B cell (primary cell): ENCODE measurements at regions of chr1 and their contacts with region 1.

Region 1: GRCh38 chr1:1122078-1122811 is 6.4 kb upstream of the C1orf159 start:
- DNase-seq: peak; percentile 90
- ATAC-seq: peak; percentile 97
- H3K4me3 ChIP-seq: peak overlapping the region in 4 of 5 experiments; percentile 28 to 52 (median 44)
- H3K4me3 Mint-ChIP-seq: peak overlapping the region; percentile 47
- H3K27ac ChIP-seq: peak overlapping the region; percentile 29 to 37
- H3K27ac Mint-ChIP-seq: no peak overlapping the region
- H3K4me1 ChIP-seq: peaks cover 29 to 31% of the 10 kb centered on the region in 2 donors
- H3K4me1 Mint-ChIP-seq: peaks cover 19% of the 10 kb centered on the region
- H3K27me3 ChIP-seq: peaks cover 0 to 30% (median 3%) of the 10 kb centered on the region in 4 experiments
- H3K27me3 Mint-ChIP-seq: peaks cover 9% of the 10 kb centered on the region
- CTCF ChIP-seq: peak; percentile 96

Region 2: GRCh38 chr1:983799-984473 is 138.3 kb before region 1 on chr1:
- CTCF ChIA-PET with region 1: interaction called, 11 read pairs
- POLR2A ChIA-PET with region 1: no interaction called
- intact Hi-C with region 1: no loop called
- DNase-seq: peak; percentile 73
- ATAC-seq: peak; percentile 95
- H3K4me3 ChIP-seq: no peak overlapping the region
- H3K4me3 Mint-ChIP-seq: no peak overlapping the region
- H3K27ac ChIP-seq: no peak overlapping the region
- H3K27ac Mint-ChIP-seq: no peak overlapping the region
- H3K4me1 ChIP-seq: peaks cover 0 to 3% of the 10 kb centered on the region in 2 donors
- H3K4me1 Mint-ChIP-seq: no peaks in the 10 kb centered on the region
- H3K27me3 ChIP-seq: peaks cover 0 to 22% (median 0%) of the 10 kb centered on the region in 4 experiments
- H3K27me3 Mint-ChIP-seq: peaks cover 38% of the 10 kb centered on the region
- CTCF ChIP-seq: peak; percentile 90

Region 3: DNA sequence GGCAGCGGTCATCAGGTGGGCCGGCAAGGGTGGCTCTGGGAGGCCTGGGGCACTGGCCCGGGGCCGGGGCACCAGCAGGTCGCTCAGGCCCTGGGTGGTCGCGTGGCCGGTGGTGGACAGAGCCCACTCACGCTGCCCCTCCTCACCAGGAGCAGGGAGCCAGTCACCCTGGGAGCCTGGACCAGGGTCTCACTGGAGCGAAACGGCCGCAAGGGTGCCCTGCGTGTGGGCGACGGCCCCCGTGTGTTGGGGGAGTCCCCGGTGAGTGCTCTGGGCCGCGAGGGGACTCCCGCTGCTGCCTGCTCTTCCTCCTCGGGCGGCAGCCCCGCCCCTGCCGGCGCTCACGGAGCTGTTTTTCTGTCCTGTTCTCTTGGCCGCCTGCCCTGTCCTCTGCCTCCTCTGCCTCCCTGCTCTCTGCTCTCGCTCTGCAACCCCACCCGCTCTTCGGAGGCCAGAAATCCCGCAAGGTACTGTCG is 71.6 kb before region 1 on chr1:
- CTCF ChIA-PET with region 1: no interaction called
- POLR2A ChIA-PET with region 1: no interaction called
- intact Hi-C with region 1: no loop called
- DNase-seq: peak; percentile 59
- ATAC-seq: peak; percentile 71
- H3K4me3 ChIP-seq: no peak overlapping the region
- H3K4me3 Mint-ChIP-seq: peak overlapping the region; percentile 32
- H3K27ac ChIP-seq: no peak overlapping the region
- H3K27ac Mint-ChIP-seq: no peak overlapping the region
- H3K4me1 ChIP-seq: no peaks in the 10 kb centered on the region
- H3K4me1 Mint-ChIP-seq: peaks cover 4% of the 10 kb centered on the region
- H3K27me3 ChIP-seq: no peaks in the 10 kb centered on the region
- H3K27me3 Mint-ChIP-seq: no peaks in the 10 kb centered on the region
- CTCF ChIP-seq: no peak

Region 4: DNA sequence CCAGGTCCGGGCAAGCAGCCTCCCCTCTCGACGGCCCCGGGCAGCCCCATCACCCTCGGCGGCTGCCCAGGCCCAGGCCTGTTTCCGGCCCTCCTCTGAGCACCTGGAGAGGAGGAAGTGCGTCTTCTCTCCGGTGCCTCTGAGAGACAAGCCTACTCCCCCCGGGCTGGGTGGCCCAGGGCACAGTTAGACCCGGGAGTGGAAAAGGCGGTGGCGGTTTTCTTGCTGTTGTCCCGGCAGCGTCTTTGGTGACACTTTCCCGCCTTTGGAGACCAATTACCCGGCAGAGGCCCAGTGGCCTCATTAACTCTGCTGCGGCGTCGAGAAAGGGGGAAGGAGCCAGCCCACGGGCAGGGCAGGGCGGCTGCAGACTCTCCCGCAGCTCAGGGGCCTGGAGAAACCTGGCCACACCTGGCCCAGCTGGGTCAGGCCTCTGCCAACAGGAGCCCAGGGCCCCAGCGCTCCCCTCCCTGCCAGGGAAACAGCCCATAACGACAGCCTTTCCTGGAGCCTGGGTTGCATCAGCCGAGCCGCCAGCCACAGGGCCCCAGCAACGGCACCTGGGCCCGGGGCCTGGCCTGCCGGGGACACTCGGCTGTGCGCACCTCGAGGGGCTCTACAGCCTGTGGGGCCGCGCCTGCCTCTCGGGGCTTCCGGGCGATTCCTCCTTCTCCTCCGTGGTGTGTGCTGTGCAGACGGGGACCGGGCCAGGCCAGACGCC is 22.0 kb after region 1 on chr1:
- CTCF ChIA-PET with region 1: interaction called, 11 read pairs
- POLR2A ChIA-PET with region 1: interaction called, 10 read pairs
- intact Hi-C with region 1: no loop called
- DNase-seq: peak; percentile 92
- ATAC-seq: peak; percentile 95
- H3K4me3 ChIP-seq: peak overlapping the region in 4 of 5 experiments; percentile 29 to 45 (median 34)
- H3K4me3 Mint-ChIP-seq: peak overlapping the region; percentile 78
- H3K27ac ChIP-seq: peak overlapping the region; percentile 98
- H3K27ac Mint-ChIP-seq: peak overlapping the region; percentile 96
- H3K4me1 ChIP-seq: peaks cover 33 to 47% of the 10 kb centered on the region in 2 donors
- H3K4me1 Mint-ChIP-seq: peaks cover 29% of the 10 kb centered on the region
- H3K27me3 ChIP-seq: no peaks in the 10 kb centered on the region
- H3K27me3 Mint-ChIP-seq: no peaks in the 10 kb centered on the region
- CTCF ChIP-seq: no peak

Region 5: GRCh38 chr1:1206376-1207260 is 84.4 kb after region 1 on chr1 and contains the start of gene TNFRSF18:
- CTCF ChIA-PET with region 1: interaction called, 39 read pairs
- POLR2A ChIA-PET with region 1: interaction called, 4 read pairs
- intact Hi-C with region 1: loop called (anchors 1 kb)
- DNase-seq: peak; percentile 72
- ATAC-seq: peak; percentile 46
- H3K4me3 ChIP-seq: peak within 1 kb of the TSS in 4 of 5 experiments; percentile 34 to 61 (median 50)
- H3K4me3 Mint-ChIP-seq: peak within 1 kb of the TSS; percentile 88
- H3K27ac ChIP-seq: no peak within 1 kb of the TSS
- H3K27ac Mint-ChIP-seq: peak within 1 kb of the TSS; percentile 63
- H3K4me1 ChIP-seq: peaks cover 44 to 52% of the 10 kb centered on the region in 2 donors
- H3K4me1 Mint-ChIP-seq: peaks cover 27% of the 10 kb centered on the region
- H3K27me3 ChIP-seq: peaks cover 0 to 41% (median 12%) of the 10 kb centered on the region in 4 experiments
- H3K27me3 Mint-ChIP-seq: peaks cover 9% of the 10 kb centered on the region
- CTCF ChIP-seq: no peak
- total RNA-seq, gene TNFRSF18: 33.5 and 38.1 TPM in 2 replicates

Region 6: DNA sequence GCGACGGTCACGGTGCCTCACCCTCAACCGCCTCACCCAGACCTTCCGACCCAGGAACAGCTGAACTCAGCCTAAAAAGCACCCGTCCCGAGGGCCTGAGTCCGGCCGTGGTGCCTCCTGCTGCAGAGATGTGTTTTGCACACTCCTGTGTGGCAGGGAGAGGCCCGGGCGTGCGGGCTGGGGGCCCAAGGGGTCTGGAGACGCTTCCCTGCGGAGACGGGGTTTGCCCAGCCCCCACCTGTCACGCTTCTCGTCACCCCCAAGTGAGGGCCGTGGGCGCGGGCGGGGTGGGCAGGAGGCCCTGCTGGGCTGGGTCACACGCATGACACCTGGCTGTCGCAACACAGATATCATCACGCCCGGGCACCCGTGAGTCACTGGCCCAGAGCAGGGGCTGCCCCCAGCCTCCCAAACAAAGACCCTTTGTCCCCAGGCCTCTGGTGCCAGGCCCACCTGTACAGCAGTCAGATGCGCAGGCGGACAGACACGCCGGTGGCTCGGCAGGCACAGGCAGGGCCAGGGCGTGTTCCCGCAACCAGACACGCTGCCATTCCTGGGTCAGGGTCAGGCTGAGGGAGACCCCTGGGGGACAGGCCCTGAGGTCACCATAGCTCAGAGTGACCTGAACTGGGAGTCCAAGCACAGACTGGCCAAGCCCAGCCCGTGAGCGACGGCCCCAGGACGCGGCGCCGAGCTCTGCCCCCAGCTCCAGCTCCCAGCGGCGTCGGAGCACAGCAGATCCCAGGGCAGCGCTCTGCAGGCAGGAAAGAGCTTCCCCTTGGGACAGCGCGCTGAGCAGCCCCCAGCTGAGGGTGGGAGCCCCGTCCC is 115.8 kb after region 1 on chr1:
- CTCF ChIA-PET with region 1: interaction called, 19 read pairs
- POLR2A ChIA-PET with region 1: interaction called, 3 read pairs
- intact Hi-C with region 1: no loop called
- DNase-seq: peak; percentile 58
- ATAC-seq: peak; percentile 55
- H3K4me3 ChIP-seq: no peak overlapping the region
- H3K4me3 Mint-ChIP-seq: peak overlapping the region; percentile 29
- H3K27ac ChIP-seq: no peak overlapping the region
- H3K27ac Mint-ChIP-seq: no peak overlapping the region
- H3K4me1 ChIP-seq: peaks cover 19% of the 10 kb centered on the region in 2 donors
- H3K4me1 Mint-ChIP-seq: peaks cover 24% of the 10 kb centered on the region
- H3K27me3 ChIP-seq: peaks cover 0 to 36% (median 8%) of the 10 kb centered on the region in 4 experiments
- H3K27me3 Mint-ChIP-seq: no peaks in the 10 kb centered on the region
- CTCF ChIP-seq: no peak

Region 7: GRCh38 chr1:1291548-1292441 is 169.6 kb after region 1 on chr1:
- CTCF ChIA-PET with region 1: interaction called, 118 read pairs
- POLR2A ChIA-PET with region 1: interaction called, 8 read pairs
- intact Hi-C with region 1: loop called (anchors 2 kb)
- DNase-seq: peak; percentile 87
- ATAC-seq: peak; percentile 84
- H3K4me3 ChIP-seq: no peak overlapping the region
- H3K4me3 Mint-ChIP-seq: no peak overlapping the region
- H3K27ac ChIP-seq: no peak overlapping the region
- H3K27ac Mint-ChIP-seq: peak overlapping the region; percentile 50
- H3K4me1 ChIP-seq: peaks cover 0 to 16% of the 10 kb centered on the region in 2 donors
- H3K4me1 Mint-ChIP-seq: peaks cover 11% of the 10 kb centered on the region
- H3K27me3 ChIP-seq: no peaks in the 10 kb centered on the region
- H3K27me3 Mint-ChIP-seq: no peaks in the 10 kb centered on the region
- CTCF ChIP-seq: peak; percentile 74